Mammary epithelial cell (primary cell): ENCODE measurements at regions of chr10 and their contacts with region 1.

Region 1: GRCh38 chr10:124125447-124126116 is 32.2 kb upstream of the CHST15 start:
- DNase-seq: peak; percentile 57
- H3K4me3 ChIP-seq: no peak overlapping the region
- H3K27ac ChIP-seq: no peak overlapping the region
- H3K4me1 ChIP-seq: peaks cover 4% of the 10 kb centered on the region
- H3K27me3 ChIP-seq: no peaks in the 10 kb centered on the region
- CTCF ChIP-seq: peak; percentile 47 to 59

Region 2: GRCh38 chr10:124066781-124067714 is 58.5 kb before region 1 on chr10:
- CTCF ChIA-PET with region 1: no interaction called
- dilution Hi-C with region 1: loop called (anchors 5 kb)
- in situ Hi-C with region 1: no loop called
- intact Hi-C with region 1: no loop called
- DNase-seq: no peak
- H3K4me3 ChIP-seq: no peak overlapping the region
- H3K27ac ChIP-seq: no peak overlapping the region
- H3K4me1 ChIP-seq: peaks cover 23% of the 10 kb centered on the region
- H3K27me3 ChIP-seq: no peaks in the 10 kb centered on the region
- CTCF ChIP-seq: no peak

Region 3: GRCh38 chr10:124145109-124145870 is 19.7 kb after region 1 on chr10:
- CTCF ChIA-PET with region 1: no interaction called
- dilution Hi-C with region 1: no loop called
- in situ Hi-C with region 1: no loop called
- intact Hi-C with region 1: no loop called
- DNase-seq: peak; percentile 12
- H3K4me3 ChIP-seq: no peak overlapping the region
- H3K27ac ChIP-seq: no peak overlapping the region
- H3K4me1 ChIP-seq: peaks cover 7% of the 10 kb centered on the region
- H3K27me3 ChIP-seq: no peaks in the 10 kb centered on the region
- CTCF ChIP-seq: no peak

Region 4: GRCh38 chr10:124236816-124237215 is 111.2 kb after region 1 on chr10:
- CTCF ChIA-PET with region 1: no interaction called
- dilution Hi-C with region 1: loop called (anchors 5 kb)
- in situ Hi-C with region 1: no loop called
- intact Hi-C with region 1: no loop called
- DNase-seq: no peak
- H3K4me3 ChIP-seq: no peak overlapping the region
- H3K27ac ChIP-seq: no peak overlapping the region
- H3K4me1 ChIP-seq: peaks cover 11% of the 10 kb centered on the region
- H3K27me3 ChIP-seq: no peaks in the 10 kb centered on the region
- CTCF ChIP-seq: no peak